ENCODE measurements at regions of chr15 and their contacts with region 1.

Region 1: GRCh38 chr15:57890351-57890750 is 175.2 kb downstream of the ALDH1A2 start:
- DNase-seq: no peak
- H3K4me3 ChIP-seq: no peak overlapping the region
- H3K27ac ChIP-seq: no peak overlapping the region
- H3K4me1 ChIP-seq: no peaks in the 10 kb centered on the region
- H3K27me3 ChIP-seq: no peaks in the 10 kb centered on the region
- CTCF ChIP-seq: no peak

Region 2: GRCh38 chr15:57947781-57948180 is 57.4 kb after region 1 on chr15:
- intact Hi-C with region 1: loop called (anchors 10 kb)
- DNase-seq: peak; percentile 43
- H3K4me3 ChIP-seq: no peak overlapping the region
- H3K27ac ChIP-seq: peak overlapping the region; percentile 21
- H3K4me1 ChIP-seq: no peaks in the 10 kb centered on the region
- H3K27me3 ChIP-seq: no peaks in the 10 kb centered on the region
- CTCF ChIP-seq: no peak

Measured in left ventricle myocardium inferior (tissue), 1 donor.